B cell (primary cell): ENCODE measurements at regions of chr9 and their contacts with region 1.

Region 1: DNA sequence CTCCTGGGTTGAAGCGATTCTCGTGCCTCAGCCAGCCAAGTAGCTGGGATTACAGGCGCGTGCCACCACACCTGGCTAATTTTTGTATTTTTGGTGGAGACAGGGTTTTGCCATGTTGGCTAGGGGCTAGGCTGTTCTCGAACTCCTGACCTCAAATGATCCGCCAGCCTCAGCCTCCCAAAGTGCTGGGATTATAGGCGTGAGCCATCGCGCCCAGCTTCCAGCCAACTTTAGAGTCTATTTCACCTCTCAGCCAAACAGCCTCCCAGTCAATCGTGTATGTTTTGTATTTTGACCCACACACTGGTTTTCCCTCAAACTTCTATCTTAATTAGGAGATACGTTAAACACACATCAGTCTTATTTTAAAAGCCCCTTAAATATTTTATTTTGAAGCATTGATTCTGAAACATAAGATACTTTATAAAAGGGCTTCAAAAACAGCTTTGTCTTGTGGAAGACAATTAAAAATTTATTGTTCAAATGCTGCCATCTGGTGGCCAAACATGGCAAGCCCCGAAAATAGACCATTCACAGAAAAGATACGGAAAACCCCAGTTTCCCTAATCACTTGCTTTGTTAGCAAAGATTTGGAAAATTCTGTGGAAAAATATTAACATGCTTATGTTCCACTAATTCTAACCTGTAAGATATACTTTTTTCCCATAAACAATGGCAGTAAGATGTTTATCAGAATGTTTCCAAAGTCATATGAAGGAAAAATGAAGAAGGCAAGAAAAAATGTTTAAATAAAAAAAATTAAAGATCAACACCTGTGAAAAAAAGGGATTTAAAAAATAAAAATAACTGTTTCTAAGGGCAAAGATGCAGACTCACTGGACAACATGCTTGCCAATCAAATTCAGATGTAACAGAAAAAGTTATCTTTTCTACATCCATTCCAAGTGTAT is 33.1 kb downstream of the APTX start:
- DNase-seq: peak; percentile 62
- ATAC-seq: no peak
- H3K4me3 ChIP-seq: no peak overlapping the region
- H3K4me3 Mint-ChIP-seq: no peak overlapping the region
- H3K27ac ChIP-seq: no peak overlapping the region
- H3K27ac Mint-ChIP-seq: no peak overlapping the region
- H3K4me1 ChIP-seq: no peaks in the 10 kb centered on the region
- H3K4me1 Mint-ChIP-seq: no peaks in the 10 kb centered on the region
- H3K27me3 ChIP-seq: no peaks in the 10 kb centered on the region
- H3K27me3 Mint-ChIP-seq: no peaks in the 10 kb centered on the region
- CTCF ChIP-seq: peak; percentile 92

Region 2: DNA sequence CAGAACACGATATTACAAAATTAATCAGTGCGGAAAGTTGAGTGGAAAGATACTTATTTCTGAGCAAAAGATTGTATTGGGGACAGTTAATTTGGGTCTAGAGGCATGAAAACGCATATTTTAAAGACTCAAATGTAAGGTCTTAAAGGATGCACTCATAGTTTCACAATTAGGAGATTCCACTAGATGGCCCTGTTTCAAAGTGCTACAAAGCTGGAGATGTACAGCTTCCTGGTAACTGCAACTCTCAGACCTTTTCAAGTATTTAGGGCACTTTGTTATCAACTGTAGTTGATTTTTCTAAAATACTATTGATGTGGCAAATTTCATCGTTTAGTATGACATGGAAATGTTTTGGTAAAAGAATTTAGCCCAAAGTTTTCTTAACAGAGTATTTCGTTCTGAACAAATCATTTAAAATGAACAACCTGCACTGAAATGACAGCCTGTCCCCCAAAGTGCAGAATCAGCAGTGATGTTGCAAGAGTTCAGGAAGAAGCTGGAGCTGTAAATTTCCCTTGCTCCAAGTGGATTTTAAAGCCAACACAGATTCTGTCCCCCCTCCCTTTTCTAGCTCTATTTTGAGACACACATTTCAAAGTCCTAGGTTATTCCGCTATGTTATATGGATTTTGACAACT is 379.2 kb before region 1 on chr9:
- CTCF ChIA-PET with region 1: interaction called, 74 read pairs
- POLR2A ChIA-PET with region 1: no interaction called
- intact Hi-C with region 1: no loop called
- DNase-seq: peak; percentile 38
- ATAC-seq: no peak
- H3K4me3 ChIP-seq: no peak overlapping the region
- H3K4me3 Mint-ChIP-seq: no peak overlapping the region
- H3K27ac ChIP-seq: no peak overlapping the region
- H3K27ac Mint-ChIP-seq: no peak overlapping the region
- H3K4me1 ChIP-seq: no peaks in the 10 kb centered on the region
- H3K4me1 Mint-ChIP-seq: no peaks in the 10 kb centered on the region
- H3K27me3 ChIP-seq: no peaks in the 10 kb centered on the region
- H3K27me3 Mint-ChIP-seq: peaks cover 38% of the 10 kb centered on the region
- CTCF ChIP-seq: peak; percentile 28

Region 3: GRCh38 chr9:33233681-33234473 is 265.5 kb after region 1 on chr9:
- CTCF ChIA-PET with region 1: no interaction called
- POLR2A ChIA-PET with region 1: no interaction called
- intact Hi-C with region 1: no loop called
- DNase-seq: no peak
- ATAC-seq: no peak
- H3K4me3 ChIP-seq: no peak overlapping the region
- H3K4me3 Mint-ChIP-seq: no peak overlapping the region
- H3K27ac ChIP-seq: no peak overlapping the region
- H3K27ac Mint-ChIP-seq: no peak overlapping the region
- H3K4me1 ChIP-seq: no peaks in the 10 kb centered on the region
- H3K4me1 Mint-ChIP-seq: no peaks in the 10 kb centered on the region
- H3K27me3 ChIP-seq: peaks cover 0 to 8% (median 0%) of the 10 kb centered on the region in 4 experiments
- H3K27me3 Mint-ChIP-seq: peaks cover 13% of the 10 kb centered on the region
- CTCF ChIP-seq: no peak